Psoas muscle (tissue), 8 donors: ENCODE measurements at regions of chr1 and their contacts with region 1.

Region 1: DNA sequence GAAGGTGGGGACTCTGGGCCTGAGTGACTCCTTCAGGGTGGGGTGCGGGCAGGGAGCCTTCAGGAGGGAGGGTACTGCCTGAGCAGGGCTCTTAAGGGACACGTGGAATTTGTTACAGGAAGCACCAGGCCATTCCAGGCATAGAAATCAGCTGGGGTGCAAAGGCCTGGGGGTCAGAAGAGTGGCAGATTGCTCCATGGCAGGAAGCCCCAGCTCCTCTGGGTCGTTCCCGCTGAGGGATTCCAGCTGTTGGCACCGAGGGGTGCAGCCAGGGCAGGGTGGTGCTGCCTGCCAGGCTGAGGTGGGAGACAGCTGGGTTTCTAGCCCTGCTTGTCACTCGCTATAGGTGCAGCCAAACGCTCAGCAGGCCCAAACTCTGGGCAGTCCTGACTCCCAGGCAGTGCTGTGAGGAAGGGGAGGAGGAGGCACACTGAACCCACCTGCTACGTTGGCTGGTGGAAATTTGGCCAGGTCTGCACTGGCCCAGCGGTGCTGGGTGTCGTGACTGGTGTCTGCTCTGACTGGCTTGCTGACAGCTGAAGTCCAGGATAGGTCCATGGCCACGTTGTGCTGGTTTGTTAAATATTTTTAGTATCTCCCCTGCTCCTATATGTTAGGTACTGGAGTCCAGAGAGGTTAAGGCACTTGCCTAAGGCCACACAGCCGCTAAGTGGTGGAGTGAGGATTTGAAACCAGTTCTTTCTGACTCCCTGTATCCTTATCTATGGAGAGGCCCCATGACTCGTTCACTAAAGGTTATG is 19.3 kb downstream of the TNFRSF1B start:
- DNase-seq: no peak
- ATAC-seq: peak in 1 of 4 donors; percentile 21
- H3K4me3 ChIP-seq: no peak overlapping the region
- H3K27ac ChIP-seq: peak overlapping the region; percentile 65
- H3K4me1 ChIP-seq: peaks cover 7% of the 10 kb centered on the region
- H3K27me3 ChIP-seq: no peaks in the 10 kb centered on the region
- CTCF ChIP-seq: no peak

Region 2: DNA sequence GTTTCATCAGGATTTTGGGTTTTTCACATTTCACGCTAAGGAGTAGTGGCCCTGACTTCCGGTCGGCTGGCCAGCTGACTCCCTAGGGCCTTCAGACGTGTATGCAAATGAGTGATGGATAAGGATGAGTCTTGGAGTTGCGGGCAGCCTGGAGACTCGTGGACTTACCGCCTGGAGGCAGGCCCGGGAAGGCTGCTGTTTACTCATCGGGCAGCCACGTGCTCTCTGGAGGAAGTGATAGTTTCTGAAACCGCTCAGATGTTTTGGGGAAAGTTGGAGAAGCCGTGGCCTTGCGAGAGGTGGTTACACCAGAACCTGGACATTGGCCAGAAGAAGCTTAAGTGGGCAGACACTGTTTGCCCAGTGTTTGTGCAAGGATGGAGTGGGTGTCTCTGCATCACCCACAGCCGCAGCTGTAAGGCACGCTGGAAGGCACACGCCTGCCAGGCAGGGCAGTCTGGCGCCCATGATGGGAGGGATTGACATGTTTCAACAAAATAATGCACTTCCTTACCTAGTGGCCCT is 42.4 kb before region 1 on chr1:
- intact Hi-C with region 1: loop called in 1 of 2 experiments (anchors 5 kb)
- DNase-seq: peak; percentile 88
- ATAC-seq: peak; percentile 63 to 83 (median 80)
- H3K4me3 ChIP-seq: no peak overlapping the region
- H3K27ac ChIP-seq: peak overlapping the region; percentile 61
- H3K4me1 ChIP-seq: peaks cover 6% of the 10 kb centered on the region
- H3K27me3 ChIP-seq: no peaks in the 10 kb centered on the region
- CTCF ChIP-seq: no peak

Region 3: GRCh38 chr1:12165342-12165741 is 20.8 kb before region 1 on chr1:
- intact Hi-C with region 1: loop called in 1 of 2 experiments (anchors 1 kb)
- DNase-seq: no peak
- ATAC-seq: no peak
- H3K4me3 ChIP-seq: no peak overlapping the region
- H3K27ac ChIP-seq: no peak overlapping the region
- H3K4me1 ChIP-seq: peaks cover 18% of the 10 kb centered on the region
- H3K27me3 ChIP-seq: peaks cover 0 to 12% (median 2%) of the 10 kb centered on the region in 3 donors
- CTCF ChIP-seq: no peak